K562 (cell line): ENCODE measurements at regions of chr3 and their contacts with region 1.

Region 1: GRCh38 chr3:196339493-196340254 is 1.5 kb upstream of the TM4SF19 start:
- DNase-seq: peak; percentile 26 to 83 (median 30)
- ATAC-seq: peak; percentile 49
- H3K4me3 ChIP-seq: peak overlapping the region; percentile 54
- H3K27ac ChIP-seq: peak overlapping the region; percentile 100
- H3K4me1 ChIP-seq: peaks cover 12 to 34% of the 10 kb centered on the region in 2 experiments
- H3K27me3 ChIP-seq: no peaks in the 10 kb centered on the region
- CTCF ChIP-seq: no peak
- EP300 ChIP-seq: peak; percentile 40
- POLR2A ChIP-seq: peak; percentile 80
- RAD21 ChIP-seq: 0 out of 4 replicates have a peak, but pooled peaks of 1 of the 2 experiments have one; percentile 14

Region 2: DNA sequence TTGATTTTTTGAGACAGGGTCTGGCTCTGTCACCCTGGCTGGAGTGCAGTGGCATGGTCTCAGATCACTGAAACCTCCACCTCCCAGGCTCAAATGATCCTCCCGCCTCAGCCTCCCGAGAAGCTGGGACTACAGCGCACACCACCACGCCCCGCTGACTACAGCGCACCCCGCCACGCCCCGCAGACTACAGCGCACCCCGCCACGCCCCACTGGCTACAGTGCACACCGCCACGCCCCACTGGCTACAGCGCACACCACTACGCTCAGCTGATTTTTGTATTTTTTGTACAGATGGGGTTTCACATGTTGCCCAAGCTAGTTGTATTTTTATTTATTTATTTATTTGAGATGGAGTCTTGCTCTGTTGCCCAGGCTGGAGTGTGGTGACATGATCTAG is 87.8 kb before region 1 on chr3:
- CTCF ChIA-PET with region 1: no interaction called
- POLR2A ChIA-PET with region 1: no interaction called
- in situ Hi-C with region 1: no loop called
- intact Hi-C with region 1: loop called (anchors 5 kb)
- DNase-seq: no peak
- ATAC-seq: no peak
- H3K4me3 ChIP-seq: no peak overlapping the region
- H3K27ac ChIP-seq: no peak overlapping the region
- H3K4me1 ChIP-seq: no peaks in the 10 kb centered on the region
- H3K27me3 ChIP-seq: no peaks in the 10 kb centered on the region
- CTCF ChIP-seq: no peak
- EP300 ChIP-seq: no peak
- POLR2A ChIP-seq: no peak
- RAD21 ChIP-seq: no peak

Region 3: GRCh38 chr3:196317687-196318467 is 21.8 kb before region 1 on chr3 and contains the start of gene DYNLT2B:
- CTCF ChIA-PET with region 1: no interaction called
- POLR2A ChIA-PET with region 1: interaction called, 51 read pairs
- in situ Hi-C with region 1: no loop called
- intact Hi-C with region 1: no loop called
- DNase-seq: peak; percentile 95 to 98 (median 96)
- ATAC-seq: peak; percentile 95
- H3K4me3 ChIP-seq: peak within 1 kb of the TSS; percentile 93
- H3K27ac ChIP-seq: peak within 1 kb of the TSS; percentile 94
- H3K4me1 ChIP-seq: peaks cover 4 to 15% of the 10 kb centered on the region in 2 experiments; a peak in 4 of 5 replicates
- H3K27me3 ChIP-seq: no peaks in the 10 kb centered on the region; a peak in 1 of 5 replicates
- CTCF ChIP-seq: peak in 2 of 3 experiments; percentile 22 to 38; a peak in 2 of 6 replicates
- EP300 ChIP-seq: no peak
- POLR2A ChIP-seq: peak; percentile 91
- RAD21 ChIP-seq: peak in 1 of 2 experiments; percentile 35; a peak in 3 of 4 replicates
- polyA plus RNA-seq, gene DYNLT2B: 9.7 to 13.3 TPM

Region 4: DNA sequence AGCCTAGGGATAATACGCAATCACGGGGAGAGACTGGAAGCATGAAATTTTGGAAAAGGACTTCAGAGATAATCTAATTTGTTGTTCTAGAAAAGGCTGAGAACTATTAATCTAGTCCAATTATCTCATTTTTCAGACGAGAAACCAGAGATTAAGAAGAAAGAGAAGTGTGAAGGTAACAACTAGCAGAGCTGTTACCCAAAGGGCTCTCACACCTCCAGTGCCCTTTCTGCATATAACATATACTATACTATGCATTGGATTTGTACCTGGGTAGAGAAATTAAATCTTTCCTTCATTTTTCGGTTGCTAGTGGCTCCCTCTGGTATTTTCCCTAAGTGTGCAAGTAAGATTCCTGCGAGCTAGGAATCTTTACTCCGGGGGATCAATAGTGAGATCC is 11.9 kb after region 1 on chr3:
- CTCF ChIA-PET with region 1: no interaction called
- POLR2A ChIA-PET with region 1: interaction called, 14 read pairs
- in situ Hi-C with region 1: no loop called
- intact Hi-C with region 1: no loop called
- DNase-seq: no peak
- ATAC-seq: no peak
- H3K4me3 ChIP-seq: no peak overlapping the region
- H3K27ac ChIP-seq: no peak overlapping the region
- H3K4me1 ChIP-seq: peaks cover 0 to 7% of the 10 kb centered on the region in 2 experiments; a peak in 2 of 5 replicates
- H3K27me3 ChIP-seq: no peaks in the 10 kb centered on the region
- CTCF ChIP-seq: no peak
- EP300 ChIP-seq: no peak
- POLR2A ChIP-seq: no peak
- RAD21 ChIP-seq: no peak

Region 5: GRCh38 chr3:196502775-196503195 is 163.1 kb after region 1 on chr3:
- CTCF ChIA-PET with region 1: no interaction called
- POLR2A ChIA-PET with region 1: no interaction called
- in situ Hi-C with region 1: no loop called
- intact Hi-C with region 1: loop called (anchors 5 kb)
- DNase-seq: peak; percentile 20 to 62 (median 26)
- ATAC-seq: peak; percentile 33
- H3K4me3 ChIP-seq: peak overlapping the region; percentile 91
- H3K27ac ChIP-seq: peak overlapping the region; percentile 93
- H3K4me1 ChIP-seq: peaks cover 10 to 14% of the 10 kb centered on the region in 2 experiments; a peak in 4 of 5 replicates
- H3K27me3 ChIP-seq: no peaks in the 10 kb centered on the region
- CTCF ChIP-seq: 0 out of 6 replicates have a peak, but pooled peaks of 1 of the 3 experiments have one; percentile 23
- EP300 ChIP-seq: no peak
- POLR2A ChIP-seq: no peak
- RAD21 ChIP-seq: no peak